Activated naive CD4-positive, alpha-beta T cell treated with anti-CD3 and anti-CD28 coated beads, Interleukin-2, amount 10 ng/mL, durations not matched to agents 7 days and 5 days (primary cell): ENCODE measurements at regions of chr17 and their contacts with region 1.

Region 1: DNA sequence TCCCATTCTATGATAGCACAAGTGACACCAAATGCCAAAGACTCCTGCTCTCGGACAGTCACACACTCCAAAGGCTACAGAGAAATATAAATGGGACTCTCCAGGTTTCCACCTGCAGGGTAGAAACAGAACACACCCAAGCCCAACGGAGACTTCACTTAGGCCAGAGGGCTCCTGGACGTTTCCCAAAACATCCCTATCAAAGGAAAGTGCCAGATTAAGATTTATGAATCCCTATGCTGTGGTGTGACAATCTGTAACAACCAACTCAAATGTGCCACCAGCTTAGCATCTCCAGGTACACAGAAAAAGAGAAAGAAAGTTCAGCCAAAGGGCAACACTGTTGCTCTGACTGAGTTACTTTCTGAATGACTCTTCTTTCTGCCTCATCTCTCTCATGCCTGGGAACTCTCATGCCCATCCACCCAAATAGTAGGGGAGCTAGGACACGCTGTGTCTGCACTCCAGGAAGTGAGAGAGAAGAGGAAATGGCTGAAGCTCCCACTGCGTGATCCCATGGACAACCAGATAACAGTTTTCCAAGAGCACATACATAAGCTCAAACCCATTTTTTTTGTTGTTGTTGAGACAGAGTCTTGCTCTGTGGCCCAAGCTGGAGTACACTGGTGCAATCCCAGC is 49.7 kb downstream of the SMG6 start:
- DNase-seq: peak; percentile 59
- H3K4me3 Mint-ChIP-seq: peak overlapping the region; percentile 32
- H3K27ac Mint-ChIP-seq: peak overlapping the region; percentile 90
- H3K4me1 Mint-ChIP-seq: peaks cover 84% of the 10 kb centered on the region
- H3K27me3 Mint-ChIP-seq: no peaks in the 10 kb centered on the region

Region 2: DNA sequence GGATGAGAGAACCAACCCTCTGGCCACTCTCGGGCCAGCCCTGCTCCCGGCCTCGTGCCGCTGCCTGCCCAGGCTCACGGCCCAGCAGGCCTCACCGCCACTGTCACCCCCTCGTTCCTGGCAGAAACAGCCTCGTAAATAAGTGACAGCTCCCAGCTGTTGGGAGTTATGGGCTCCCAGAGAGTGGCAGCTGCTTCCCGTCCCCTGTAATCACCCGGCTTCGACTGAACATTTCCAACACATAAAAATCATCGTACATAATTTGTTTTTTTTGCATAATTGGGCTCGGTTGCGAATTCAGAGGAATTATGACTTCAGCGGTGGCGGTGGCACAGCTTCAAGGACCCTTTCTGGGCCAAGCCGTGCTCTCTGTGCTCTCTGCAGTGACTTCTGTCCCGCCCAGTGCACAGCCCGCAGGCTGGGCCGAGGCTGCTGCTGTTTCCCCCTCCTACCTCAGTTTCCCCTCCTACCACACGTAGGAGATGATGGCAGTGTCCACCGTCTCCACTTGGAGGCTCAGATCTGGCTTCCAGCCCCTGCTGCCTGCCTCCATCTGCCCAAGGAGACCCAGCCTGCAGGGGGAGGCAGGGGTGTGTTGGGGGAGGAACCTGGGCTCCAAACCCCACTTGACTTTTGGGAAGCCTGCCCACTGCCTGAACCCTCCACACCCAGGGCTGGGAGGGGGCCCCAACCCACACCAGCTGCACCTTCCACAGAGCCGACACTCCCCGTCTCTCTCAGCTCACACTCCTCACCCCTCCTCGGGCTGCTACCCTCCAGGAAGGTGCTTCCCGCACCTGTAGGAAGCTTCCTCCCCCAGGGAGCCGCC is 313.7 kb before region 1 on chr17:
- CTCF ChIA-PET with region 1: no interaction called
- DNase-seq: no peak
- H3K4me3 Mint-ChIP-seq: no peak overlapping the region
- H3K27ac Mint-ChIP-seq: no peak overlapping the region
- H3K4me1 Mint-ChIP-seq: no peaks in the 10 kb centered on the region
- H3K27me3 Mint-ChIP-seq: peaks cover 28% of the 10 kb centered on the region

Region 3: DNA sequence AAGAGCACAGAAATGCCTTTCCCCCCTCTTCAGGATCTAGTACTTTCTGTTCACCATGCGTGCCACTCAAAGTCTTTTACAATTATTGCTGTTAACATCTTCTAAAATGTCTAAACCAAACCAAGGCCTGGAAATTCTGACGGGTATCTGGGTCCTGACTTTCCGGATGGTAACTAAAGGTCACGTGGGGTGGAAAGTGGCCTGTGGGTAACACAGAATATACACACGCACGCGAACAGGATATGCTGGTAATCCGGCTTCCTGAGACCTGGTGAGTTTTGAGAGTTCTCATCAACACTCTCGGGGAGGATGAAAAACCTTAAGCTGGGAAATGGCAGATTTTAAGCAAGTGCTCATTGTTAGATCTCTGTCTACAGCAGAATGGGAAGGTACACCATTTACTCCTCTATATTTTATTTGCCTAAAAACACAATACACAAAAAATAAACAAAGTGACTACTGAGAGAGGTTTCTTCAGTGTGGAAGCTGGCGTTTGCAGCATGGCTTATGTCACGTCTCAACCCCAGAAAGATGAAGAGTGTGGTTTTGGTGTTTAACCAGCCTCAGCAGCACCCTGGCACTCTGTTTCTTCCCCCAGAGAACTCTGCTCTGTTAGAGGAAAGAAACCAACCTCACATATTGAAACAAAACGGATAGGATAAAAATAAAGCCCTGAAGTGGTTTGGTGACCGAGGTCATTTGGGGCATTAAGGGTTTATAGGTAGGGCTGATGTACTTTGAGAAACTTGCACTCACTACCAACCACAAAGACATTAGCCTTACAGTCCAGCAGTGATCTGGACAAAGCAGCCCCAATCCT is 12.4 kb after region 1 on chr17:
- CTCF ChIA-PET with region 1: interaction called, 71 read pairs
- DNase-seq: peak; percentile 93
- H3K4me3 Mint-ChIP-seq: peak overlapping the region; percentile 80
- H3K27ac Mint-ChIP-seq: peak overlapping the region; percentile 99
- H3K4me1 Mint-ChIP-seq: peaks cover 89% of the 10 kb centered on the region
- H3K27me3 Mint-ChIP-seq: no peaks in the 10 kb centered on the region

Region 4: GRCh38 chr17:2282297-2282873 is 28.5 kb after region 1 on chr17:
- CTCF ChIA-PET with region 1: interaction called, 18 read pairs
- DNase-seq: no peak
- H3K4me3 Mint-ChIP-seq: no peak overlapping the region
- H3K27ac Mint-ChIP-seq: peak overlapping the region; percentile 75
- H3K4me1 Mint-ChIP-seq: peaks cover 53% of the 10 kb centered on the region
- H3K27me3 Mint-ChIP-seq: no peaks in the 10 kb centered on the region